Mammary epithelial cell (primary cell): ENCODE measurements at regions of chr5 and their contacts with region 1.

Region 1: DNA sequence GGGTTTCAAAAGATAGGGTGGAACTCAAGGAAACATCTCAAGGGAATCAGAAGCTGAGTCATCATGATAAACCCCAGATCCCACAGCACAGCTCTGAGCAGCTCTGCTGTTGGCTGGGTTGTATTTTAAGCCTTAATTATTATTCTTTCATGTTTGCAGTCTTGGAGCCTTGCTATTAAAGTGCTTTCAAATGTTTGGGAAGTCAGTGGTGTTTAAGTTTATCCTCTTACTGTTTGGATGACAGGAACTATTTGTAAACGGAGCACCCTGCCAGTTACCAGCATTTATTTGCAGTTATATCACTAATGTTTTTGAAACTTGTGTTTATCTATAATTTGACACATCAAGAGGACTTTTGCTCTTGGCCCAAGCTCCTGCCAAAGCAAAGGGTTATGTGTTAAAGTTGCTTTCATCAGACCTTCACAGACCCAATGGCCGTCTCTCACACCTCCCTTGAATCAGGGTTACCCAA is 141.1 kb upstream of the SPDL1 start:
- DNase-seq: no peak
- H3K4me3 ChIP-seq: no peak overlapping the region
- H3K27ac ChIP-seq: no peak overlapping the region
- H3K4me1 ChIP-seq: no peaks in the 10 kb centered on the region
- H3K27me3 ChIP-seq: no peaks in the 10 kb centered on the region
- CTCF ChIP-seq: no peak

Region 2: GRCh38 chr5:169390265-169390664 is 52.2 kb before region 1 on chr5:
- CTCF ChIA-PET with region 1: no interaction called
- dilution Hi-C with region 1: loop called (anchors 5 kb)
- in situ Hi-C with region 1: no loop called
- intact Hi-C with region 1: no loop called
- DNase-seq: no peak
- H3K4me3 ChIP-seq: no peak overlapping the region
- H3K27ac ChIP-seq: no peak overlapping the region
- H3K4me1 ChIP-seq: peaks cover 9% of the 10 kb centered on the region
- H3K27me3 ChIP-seq: no peaks in the 10 kb centered on the region
- CTCF ChIP-seq: peak in 1 of 2 donors; percentile 19